ENCODE measurements at regions of chr11 and their contacts with region 1.

Region 1: GRCh38 chr11:114340311-114341131 is 44.3 kb downstream of the NNMT start:
- DNase-seq: peak; percentile 15 to 31
- ATAC-seq: peak; percentile 77 to 92 (median 84)
- H3K4me3 ChIP-seq: peak overlapping the region in 7 of 10 donors; percentile 4 to 46 (median 37)
- H3K27ac ChIP-seq: peak overlapping the region in 9 of 10 donors; percentile 18 to 81 (median 50)
- H3K4me1 ChIP-seq: peaks cover 0 to 21% (median 10%) of the 10 kb centered on the region in 9 donors
- H3K27me3 ChIP-seq: no peaks in the 10 kb centered on the region
- CTCF ChIP-seq: peak; percentile 61 to 89 (median 79)

Region 2: DNA sequence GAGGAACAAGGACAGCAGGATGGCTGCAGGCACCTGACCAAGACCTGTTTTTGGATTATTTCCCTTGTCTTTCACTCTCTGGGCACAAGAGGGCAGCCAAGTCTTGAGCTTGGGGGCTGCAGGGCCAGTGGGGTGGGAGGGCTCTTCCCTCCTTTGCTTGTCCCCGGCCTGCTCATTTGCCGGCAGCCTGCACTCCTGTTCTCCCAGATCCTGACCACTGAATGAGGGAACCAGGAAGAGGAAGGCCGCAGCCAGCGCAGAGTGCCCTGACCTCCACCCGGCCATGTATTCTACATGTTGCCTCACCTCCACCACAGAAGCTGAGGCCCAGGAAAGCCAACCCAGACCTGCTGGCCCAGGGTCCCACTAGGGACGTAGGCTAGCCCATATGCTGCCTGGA is 59.8 kb before region 1 on chr11:
- intact Hi-C with region 1: loop called in 2 of 10 experiments (anchors 5 to 10 kb)
- DNase-seq: peak; percentile 41 to 68
- ATAC-seq: peak; percentile 74 to 92 (median 86)
- H3K4me3 ChIP-seq: no peak overlapping the region
- H3K27ac ChIP-seq: peak overlapping the region in 7 of 10 donors; percentile 18 to 79 (median 58)
- H3K4me1 ChIP-seq: peaks cover 4 to 30% (median 21%) of the 10 kb centered on the region in 9 donors
- H3K27me3 ChIP-seq: no peaks in the 10 kb centered on the region
- CTCF ChIP-seq: peak; percentile 48 to 83 (median 71)

Region 3: DNA sequence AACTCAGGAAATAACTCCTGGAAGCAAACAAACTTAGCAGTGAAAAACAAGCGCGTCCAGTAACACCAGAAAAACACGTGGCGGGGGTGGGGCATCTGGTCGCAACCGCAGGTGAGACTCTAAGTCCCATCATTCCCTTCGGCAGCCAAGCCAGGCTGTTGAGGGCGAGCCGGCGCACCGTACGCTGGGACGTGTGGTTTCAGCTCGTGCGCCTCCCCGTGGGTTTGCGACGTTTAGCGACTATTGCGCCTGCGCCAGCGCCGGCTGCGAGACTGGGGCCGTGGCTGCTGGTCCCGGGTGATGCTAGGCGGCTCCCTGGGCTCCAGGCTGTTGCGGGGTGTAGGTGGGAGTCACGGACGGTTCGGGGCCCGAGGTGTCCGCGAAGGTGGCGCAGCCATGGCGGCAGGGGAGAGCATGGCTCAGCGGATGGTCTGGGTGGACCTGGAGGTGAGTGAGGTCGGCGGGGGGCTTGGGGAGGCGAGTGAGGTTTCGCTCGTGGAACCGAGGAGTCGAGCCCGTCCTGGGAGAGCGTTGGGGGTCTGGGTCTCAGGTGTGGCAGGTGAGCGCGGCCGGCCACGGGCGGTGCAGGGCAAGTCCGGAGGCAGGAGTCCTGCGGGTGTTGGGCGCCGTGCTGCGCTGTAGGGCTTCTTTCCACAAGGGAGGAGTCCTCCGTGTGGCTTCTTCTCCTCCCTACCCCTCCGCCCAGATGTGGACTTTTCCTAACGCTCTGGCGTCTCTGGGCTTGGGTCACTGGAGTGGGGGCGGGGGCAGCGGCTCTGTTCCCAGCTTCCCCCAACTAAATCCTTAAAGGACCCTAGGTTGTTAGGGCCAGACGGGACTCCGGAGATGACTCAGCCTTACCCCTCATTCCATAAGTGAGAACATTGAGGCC is 99.0 kb after region 1 on chr11 and contains the start of gene REXO2:
- intact Hi-C with region 1: loop called in 3 of 10 experiments (anchors 5 to 10 kb)
- DNase-seq: peak; percentile 96
- ATAC-seq: peak; percentile 98 to 99 (median 99)
- H3K4me3 ChIP-seq: peak within 1 kb of the TSS; percentile 71 to 99 (median 85)
- H3K27ac ChIP-seq: peak within 1 kb of the TSS; percentile 69 to 91 (median 86)
- H3K4me1 ChIP-seq: peaks cover 4 to 46% (median 32%) of the 10 kb centered on the region in 9 donors
- H3K27me3 ChIP-seq: no peaks in the 10 kb centered on the region
- CTCF ChIP-seq: peak in 7 of 9 donors; percentile 18 to 62 (median 40)
- total RNA-seq, gene REXO2: 140 to 204 (median 174) TPM

Region 4: DNA sequence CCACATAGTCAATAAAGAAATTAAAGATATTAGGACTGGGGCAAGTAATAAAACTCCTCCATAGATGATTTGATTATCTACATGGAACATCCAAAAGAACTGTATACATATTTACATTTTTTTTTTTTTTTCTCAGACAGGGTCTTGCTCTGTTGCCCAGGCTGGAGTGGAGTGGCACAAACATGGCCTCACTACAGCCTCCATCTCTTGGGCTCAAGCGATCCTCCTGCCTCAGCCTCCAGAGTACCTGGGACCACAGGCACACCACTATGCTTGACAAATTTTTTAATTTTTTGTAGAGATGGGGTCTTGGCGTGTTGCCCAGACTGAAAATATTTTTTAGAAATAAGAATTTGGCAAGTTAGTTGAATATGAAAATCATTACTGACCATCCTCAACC is 123.5 kb after region 1 on chr11:
- intact Hi-C with region 1: no loop called
- DNase-seq: no peak
- ATAC-seq: no peak
- H3K4me3 ChIP-seq: no peak overlapping the region
- H3K27ac ChIP-seq: no peak overlapping the region
- H3K4me1 ChIP-seq: peaks cover 0 to 7% (median 0%) of the 10 kb centered on the region in 9 donors
- H3K27me3 ChIP-seq: no peaks in the 10 kb centered on the region
- CTCF ChIP-seq: no peak

Region 5: DNA sequence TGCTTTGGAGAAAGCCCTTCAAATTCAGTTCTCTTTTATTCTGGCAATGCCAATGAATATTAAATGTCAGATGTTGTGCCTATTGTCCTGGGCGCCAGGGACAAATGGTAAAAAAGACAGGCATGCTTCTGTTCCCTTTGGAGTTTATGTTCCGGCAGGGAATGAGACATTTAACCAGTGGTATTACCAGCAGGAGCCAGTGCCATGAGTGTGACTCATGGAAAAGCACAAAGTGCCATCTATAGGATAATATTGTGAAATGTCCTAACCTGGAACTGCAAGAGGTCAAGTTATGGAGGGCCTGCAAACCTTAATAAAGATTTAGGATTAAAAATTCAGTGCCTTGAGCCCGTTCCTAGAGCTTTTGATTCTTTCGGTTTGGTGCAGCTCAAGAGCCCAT is 138.2 kb after region 1 on chr11:
- intact Hi-C with region 1: loop called in 1 of 10 experiments (anchors 10 kb)
- DNase-seq: no peak
- ATAC-seq: peak in 1 of 8 donors; percentile 31
- H3K4me3 ChIP-seq: no peak overlapping the region
- H3K27ac ChIP-seq: no peak overlapping the region
- H3K4me1 ChIP-seq: peaks cover 0 to 8% (median 0%) of the 10 kb centered on the region in 9 donors
- H3K27me3 ChIP-seq: no peaks in the 10 kb centered on the region
- CTCF ChIP-seq: peak in 2 of 9 donors; percentile 15 to 24

Region 6: GRCh38 chr11:114606003-114606801 is 265.7 kb after region 1 on chr11:
- intact Hi-C with region 1: loop called in 2 of 10 experiments (anchors 10 kb)
- DNase-seq: no peak
- ATAC-seq: no peak
- H3K4me3 ChIP-seq: no peak overlapping the region
- H3K27ac ChIP-seq: no peak overlapping the region
- H3K4me1 ChIP-seq: no peaks in the 10 kb centered on the region
- H3K27me3 ChIP-seq: no peaks in the 10 kb centered on the region
- CTCF ChIP-seq: no peak

Region 7: DNA sequence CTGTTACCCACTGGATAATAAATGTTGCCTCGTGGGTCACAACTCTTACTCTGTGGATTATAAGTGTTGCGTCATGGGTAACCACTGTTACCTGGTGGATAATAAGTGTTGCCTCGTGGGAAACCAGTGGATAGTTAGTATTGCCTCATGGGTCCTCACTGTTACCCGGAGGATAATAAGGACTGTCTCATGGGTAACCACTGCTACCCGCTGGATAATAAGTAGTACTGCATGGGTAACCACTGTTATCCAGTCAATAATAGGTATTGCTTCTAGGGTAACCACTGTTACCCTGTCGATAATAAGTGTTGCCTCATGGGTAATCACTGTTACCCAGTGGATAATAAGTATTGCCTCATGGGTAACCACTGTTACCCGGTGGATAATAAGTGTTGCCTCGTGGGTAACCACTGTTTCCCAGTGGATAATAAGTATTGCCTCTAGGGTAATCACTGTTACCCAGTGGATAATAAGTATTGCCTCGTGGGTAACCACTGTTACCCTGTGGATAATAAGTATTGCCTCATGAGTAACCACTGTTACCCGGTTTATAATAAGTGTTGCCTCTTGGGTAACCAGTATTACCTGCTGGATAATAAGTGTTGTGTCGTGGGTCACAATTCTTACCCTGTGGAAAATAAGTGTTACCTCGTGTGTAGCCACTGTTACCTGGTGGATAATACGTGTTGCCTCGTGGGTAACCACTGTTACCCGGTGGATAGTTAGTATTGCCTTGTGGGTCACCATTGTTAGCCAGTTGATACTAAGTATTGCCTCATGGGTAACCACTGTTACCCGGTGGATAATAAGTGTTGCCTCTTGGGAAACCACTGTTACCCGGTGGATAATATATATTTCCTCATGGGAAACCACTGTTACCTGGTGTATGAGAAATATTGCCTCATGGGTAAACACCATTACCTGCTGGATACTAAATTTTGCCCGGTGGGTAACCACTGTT is 270.7 kb after region 1 on chr11:
- intact Hi-C with region 1: loop called in 2 of 10 experiments (anchors 10 kb)
- DNase-seq: no peak
- ATAC-seq: no peak
- H3K4me3 ChIP-seq: no peak overlapping the region
- H3K27ac ChIP-seq: no peak overlapping the region
- H3K4me1 ChIP-seq: no peaks in the 10 kb centered on the region
- H3K27me3 ChIP-seq: no peaks in the 10 kb centered on the region
- CTCF ChIP-seq: peak in 5 of 9 donors; percentile 4 to 37 (median 15)

Region 8: GRCh38 chr11:114762408-114762807 is 421.9 kb after region 1 on chr11:
- intact Hi-C with region 1: loop called (anchors 2 to 10 kb)
- DNase-seq: peak; percentile 61 to 64
- ATAC-seq: peak; percentile 73 to 91 (median 82)
- H3K4me3 ChIP-seq: no peak overlapping the region
- H3K27ac ChIP-seq: no peak overlapping the region
- H3K4me1 ChIP-seq: no peaks in the 10 kb centered on the region
- H3K27me3 ChIP-seq: peaks cover 0 to 5% (median 0%) of the 10 kb centered on the region in 7 donors
- CTCF ChIP-seq: peak; percentile 33 to 79 (median 76)

Region 9: GRCh38 chr11:115153135-115153534 is 812.6 kb after region 1 on chr11:
- intact Hi-C with region 1: no loop called
- DNase-seq: no peak
- ATAC-seq: no peak
- H3K4me3 ChIP-seq: no peak overlapping the region
- H3K27ac ChIP-seq: no peak overlapping the region
- H3K4me1 ChIP-seq: no peaks in the 10 kb centered on the region
- H3K27me3 ChIP-seq: peaks cover 0 to 19% (median 0%) of the 10 kb centered on the region in 7 donors
- CTCF ChIP-seq: no peak